ENCODE measurements at regions of chr15 and their contacts with region 1.

Region 1: DNA sequence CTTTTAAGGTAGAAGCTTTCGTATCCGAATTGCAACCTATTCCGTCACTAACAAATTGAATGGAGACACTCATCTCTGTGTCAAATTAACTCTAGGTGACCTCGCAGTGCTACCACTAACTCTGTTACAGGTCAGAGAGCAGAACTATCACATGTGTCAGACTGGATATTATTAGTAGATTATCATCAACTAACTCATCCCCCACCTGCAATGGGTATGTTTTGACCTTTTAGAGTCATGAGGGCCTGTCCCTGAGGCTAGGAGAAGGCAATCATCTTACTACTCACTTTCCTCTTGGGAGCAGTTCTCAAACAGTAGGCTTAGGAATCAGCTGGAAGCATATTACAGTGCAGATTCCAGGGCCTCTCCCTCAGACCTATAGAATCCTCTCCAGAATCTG is 2.0 kb downstream of the GLDN start:
- DNase-seq: no peak
- ATAC-seq: no peak
- H3K4me3 ChIP-seq: no peak overlapping the region
- H3K27ac ChIP-seq: no peak overlapping the region
- H3K4me1 ChIP-seq: no peaks in the 10 kb centered on the region
- H3K27me3 ChIP-seq: peaks cover 5 to 38% of the 10 kb centered on the region in 2 experiments; a peak in 3 of 5 replicates
- CTCF ChIP-seq: no peak
- EP300 ChIP-seq: no peak
- POLR2A ChIP-seq: no peak
- RAD21 ChIP-seq: no peak

Region 2: DNA sequence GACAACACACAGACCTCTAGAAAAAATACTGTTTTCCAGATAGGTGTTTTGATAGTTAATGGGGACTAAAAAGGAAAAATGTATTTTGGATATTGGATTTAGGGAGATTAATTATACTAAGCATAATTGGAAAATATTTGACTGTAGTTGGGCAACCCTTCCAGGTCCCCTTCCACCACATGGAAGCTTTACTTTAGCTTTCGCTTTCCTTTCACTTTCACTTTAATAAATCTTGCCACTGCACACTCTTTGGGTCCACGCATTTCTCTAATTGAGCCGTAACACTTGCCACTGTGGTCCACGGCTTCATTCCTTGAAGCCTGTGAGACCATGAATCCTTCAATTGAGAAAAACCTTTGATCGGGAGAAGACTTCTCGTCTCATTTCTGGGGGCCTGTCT is 13.5 kb after region 1 on chr15:
- CTCF ChIA-PET with region 1: no interaction called
- POLR2A ChIA-PET with region 1: no interaction called
- in situ Hi-C with region 1: no loop called
- intact Hi-C with region 1: loop called (anchors 1 kb)
- DNase-seq: no peak
- ATAC-seq: no peak
- H3K4me3 ChIP-seq: no peak overlapping the region
- H3K27ac ChIP-seq: no peak overlapping the region
- H3K4me1 ChIP-seq: peaks cover 8% of the 10 kb centered on the region; the same call in 1 of the 2 replicates
- H3K27me3 ChIP-seq: no peaks in the 10 kb centered on the region
- CTCF ChIP-seq: no peak
- EP300 ChIP-seq: no peak
- POLR2A ChIP-seq: no peak
- RAD21 ChIP-seq: no peak

Region 3: DNA sequence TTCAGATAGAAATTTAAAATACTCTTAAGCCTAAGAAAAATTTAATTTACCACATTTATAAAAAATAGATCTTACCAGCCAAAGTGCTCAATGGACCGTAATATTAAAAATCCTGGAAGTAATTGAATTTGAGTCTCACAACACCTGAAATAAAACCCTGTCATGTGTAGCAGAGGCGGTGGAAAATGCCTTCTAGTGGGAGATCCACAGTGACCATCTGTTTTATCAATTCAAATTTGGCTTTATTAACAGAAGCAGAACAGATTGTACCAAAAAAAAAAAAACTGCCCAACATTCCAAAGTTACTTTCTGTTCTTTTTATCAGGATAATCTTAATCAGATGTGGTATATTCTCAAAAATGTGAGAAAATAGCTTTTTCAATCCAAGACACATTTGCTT is 207.4 kb after region 1 on chr15:
- CTCF ChIA-PET with region 1: no interaction called
- POLR2A ChIA-PET with region 1: no interaction called
- in situ Hi-C with region 1: no loop called
- intact Hi-C with region 1: no loop called
- DNase-seq: no peak
- ATAC-seq: no peak
- H3K4me3 ChIP-seq: no peak overlapping the region
- H3K27ac ChIP-seq: no peak overlapping the region
- H3K4me1 ChIP-seq: no peaks in the 10 kb centered on the region
- H3K27me3 ChIP-seq: no peaks in the 10 kb centered on the region
- CTCF ChIP-seq: no peak
- EP300 ChIP-seq: no peak
- POLR2A ChIP-seq: no peak
- RAD21 ChIP-seq: no peak

Measured in HepG2 (cell line).